Naive thymus-derived CD4-positive, alpha-beta T cell (primary cell): ENCODE measurements at regions of chr19 and their contacts with region 1.

Region 1: GRCh38 chr19:48842789-48843162 is 6.5 kb upstream of the HSD17B14 start:
- DNase-seq: peak in 8 of 9 donors; percentile 37 to 62 (median 49)
- ATAC-seq: peak; percentile 67
- H3K4me3 ChIP-seq: no peak overlapping the region
- H3K4me3 Mint-ChIP-seq: peak overlapping the region in 1 of 10 donors; percentile 53
- H3K27ac ChIP-seq: no peak overlapping the region
- H3K27ac Mint-ChIP-seq: peak overlapping the region in 3 of 9 donors; percentile 44 to 53 (median 51)
- H3K4me1 ChIP-seq: no peaks in the 10 kb centered on the region
- H3K4me1 Mint-ChIP-seq: peaks cover 0 to 6% (median 3%) of the 10 kb centered on the region in 7 donors
- H3K27me3 ChIP-seq: no peaks in the 10 kb centered on the region
- H3K27me3 Mint-ChIP-seq: peaks cover 0 to 2% (median 0%) of the 10 kb centered on the region in 5 donors

Region 2: DNA sequence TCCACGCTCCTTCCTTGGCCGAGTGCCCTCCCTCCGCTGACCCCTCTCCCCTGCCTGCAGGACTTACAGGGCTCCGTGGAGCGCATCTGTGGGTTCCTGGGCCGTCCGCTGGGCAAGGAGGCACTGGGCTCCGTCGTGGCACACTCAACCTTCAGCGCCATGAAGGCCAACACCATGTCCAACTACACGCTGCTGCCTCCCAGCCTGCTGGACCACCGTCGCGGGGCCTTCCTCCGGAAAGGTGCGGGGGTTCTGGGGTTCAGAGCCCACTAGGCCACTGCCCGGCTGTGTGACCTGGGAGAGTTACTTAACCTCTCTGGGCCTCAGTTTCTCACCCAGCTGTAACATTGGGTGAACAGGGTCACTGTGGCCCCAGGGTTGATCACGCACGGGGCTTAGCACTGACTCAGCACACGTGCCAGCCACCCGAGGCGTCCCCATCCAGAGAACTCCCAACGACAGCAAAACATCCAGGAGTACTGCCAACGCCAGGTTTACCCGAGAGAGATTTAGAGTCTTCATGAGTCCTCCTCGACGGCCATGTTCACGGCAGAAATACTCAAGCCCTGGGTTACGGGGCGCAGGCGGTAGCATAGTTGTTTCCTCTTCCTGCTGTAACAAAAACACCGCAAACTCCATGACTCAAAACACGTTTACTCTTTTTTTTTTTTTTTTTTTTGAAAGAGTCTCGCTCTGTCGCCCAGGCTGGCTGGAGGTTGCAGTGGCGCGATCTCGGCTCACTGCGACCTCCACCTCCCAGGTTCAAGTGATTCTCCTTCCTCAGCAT is 245.9 kb before region 1 on chr19:
- CTCF ChIA-PET with region 1: no interaction called
- POLR2A ChIA-PET with region 1: no interaction called
- intact Hi-C with region 1: no loop called
- DNase-seq: peak in 6 of 9 donors; percentile 36 to 53 (median 46)
- ATAC-seq: peak; percentile 82
- H3K4me3 ChIP-seq: peak overlapping the region; percentile 46
- H3K4me3 Mint-ChIP-seq: peak overlapping the region in 9 of 10 donors; percentile 13 to 81 (median 59)
- H3K27ac ChIP-seq: peak overlapping the region; percentile 60
- H3K27ac Mint-ChIP-seq: peak overlapping the region; percentile 48 to 90 (median 82)
- H3K4me1 ChIP-seq: peaks cover 6 to 8% of the 10 kb centered on the region in 2 donors
- H3K4me1 Mint-ChIP-seq: peaks cover 0 to 9% (median 4%) of the 10 kb centered on the region in 7 donors
- H3K27me3 ChIP-seq: no peaks in the 10 kb centered on the region
- H3K27me3 Mint-ChIP-seq: peaks cover 0 to 4% (median 0%) of the 10 kb centered on the region in 5 donors

Region 3: DNA sequence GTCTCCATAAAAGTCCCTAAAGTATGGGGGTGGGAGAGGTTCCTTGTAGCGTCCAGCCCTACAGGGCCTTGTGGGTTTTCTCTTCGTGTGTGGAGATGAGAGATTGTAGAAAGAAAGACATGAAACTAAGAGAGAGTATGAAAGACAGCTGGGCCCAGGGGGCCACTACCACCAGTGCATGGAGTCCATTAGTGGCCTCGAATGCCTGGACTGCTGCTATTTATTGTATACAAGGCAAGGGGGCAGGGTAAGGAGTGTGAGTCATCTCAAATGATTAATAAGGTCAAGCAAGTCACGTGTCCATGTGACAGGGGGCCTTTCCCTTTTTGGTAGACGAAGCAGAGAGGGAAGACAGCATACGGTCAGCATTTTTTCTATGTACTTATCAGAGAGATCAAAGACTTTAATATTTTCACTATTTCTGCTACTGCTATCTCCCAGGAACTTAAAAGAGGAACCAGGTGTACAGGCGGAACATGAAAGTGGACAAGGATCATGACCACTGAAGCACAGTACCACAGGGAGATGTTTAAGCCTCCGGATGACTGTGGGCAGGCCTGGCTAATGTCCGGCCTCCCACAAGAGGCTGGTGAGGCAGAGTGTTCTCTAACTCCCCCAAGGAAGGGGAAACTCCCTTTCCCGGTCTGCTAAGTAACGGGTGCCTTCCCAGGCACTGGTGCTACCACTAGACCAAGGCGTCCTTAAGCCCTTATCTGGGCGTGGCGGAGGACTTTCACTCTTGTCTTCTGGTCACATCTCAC is 62.0 kb before region 1 on chr19:
- CTCF ChIA-PET with region 1: interaction called, 14 read pairs
- POLR2A ChIA-PET with region 1: interaction called, 3 read pairs
- intact Hi-C with region 1: no loop called
- DNase-seq: no peak
- ATAC-seq: peak; percentile 43
- H3K4me3 ChIP-seq: no peak overlapping the region
- H3K4me3 Mint-ChIP-seq: no peak overlapping the region
- H3K27ac ChIP-seq: no peak overlapping the region
- H3K27ac Mint-ChIP-seq: no peak overlapping the region
- H3K4me1 ChIP-seq: no peaks in the 10 kb centered on the region
- H3K4me1 Mint-ChIP-seq: peaks cover 0 to 4% (median 3%) of the 10 kb centered on the region in 7 donors
- H3K27me3 ChIP-seq: no peaks in the 10 kb centered on the region
- H3K27me3 Mint-ChIP-seq: peaks cover 0 to 7% (median 4%) of the 10 kb centered on the region in 5 donors

Region 4: GRCh38 chr19:48826606-48827020 is 16.2 kb before region 1 on chr19:
- CTCF ChIA-PET with region 1: interaction called, 10 read pairs
- POLR2A ChIA-PET with region 1: no interaction called
- intact Hi-C with region 1: no loop called
- DNase-seq: no peak
- ATAC-seq: no peak
- H3K4me3 ChIP-seq: no peak overlapping the region
- H3K4me3 Mint-ChIP-seq: no peak overlapping the region
- H3K27ac ChIP-seq: no peak overlapping the region
- H3K27ac Mint-ChIP-seq: no peak overlapping the region
- H3K4me1 ChIP-seq: no peaks in the 10 kb centered on the region
- H3K4me1 Mint-ChIP-seq: no peaks in the 10 kb centered on the region
- H3K27me3 ChIP-seq: no peaks in the 10 kb centered on the region
- H3K27me3 Mint-ChIP-seq: no peaks in the 10 kb centered on the region

Region 5: DNA sequence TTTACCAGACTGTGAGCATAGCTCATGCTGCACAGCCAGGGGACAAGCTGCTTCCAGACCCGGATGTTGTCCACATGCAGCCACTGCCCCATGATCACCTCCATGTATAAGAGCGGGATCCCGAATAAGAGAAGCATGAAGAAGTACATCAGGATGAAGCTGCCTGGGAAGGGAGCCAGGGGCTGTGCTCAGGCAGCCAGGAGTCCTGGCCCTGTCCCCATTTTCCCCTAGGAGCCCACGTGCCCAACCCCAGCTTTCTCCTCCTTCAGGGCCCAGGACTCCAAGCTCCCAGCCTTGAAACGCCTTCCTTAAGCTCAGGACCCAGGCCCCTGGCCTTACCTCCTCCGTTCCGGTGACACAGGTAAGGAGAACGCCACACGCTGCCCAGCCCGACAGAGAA is 412.9 kb after region 1 on chr19:
- CTCF ChIA-PET with region 1: no interaction called
- POLR2A ChIA-PET with region 1: no interaction called
- intact Hi-C with region 1: no loop called
- DNase-seq: no peak
- ATAC-seq: no peak
- H3K4me3 ChIP-seq: no peak overlapping the region
- H3K4me3 Mint-ChIP-seq: no peak overlapping the region
- H3K27ac ChIP-seq: no peak overlapping the region
- H3K27ac Mint-ChIP-seq: no peak overlapping the region
- H3K4me1 ChIP-seq: no peaks in the 10 kb centered on the region
- H3K4me1 Mint-ChIP-seq: no peaks in the 10 kb centered on the region
- H3K27me3 ChIP-seq: peaks cover 0 to 3% of the 10 kb centered on the region in 2 donors
- H3K27me3 Mint-ChIP-seq: peaks cover 19 to 48% (median 44%) of the 10 kb centered on the region in 5 donors